ENCODE measurements at regions of chr3 and their contacts with region 1.

Region 1: DNA sequence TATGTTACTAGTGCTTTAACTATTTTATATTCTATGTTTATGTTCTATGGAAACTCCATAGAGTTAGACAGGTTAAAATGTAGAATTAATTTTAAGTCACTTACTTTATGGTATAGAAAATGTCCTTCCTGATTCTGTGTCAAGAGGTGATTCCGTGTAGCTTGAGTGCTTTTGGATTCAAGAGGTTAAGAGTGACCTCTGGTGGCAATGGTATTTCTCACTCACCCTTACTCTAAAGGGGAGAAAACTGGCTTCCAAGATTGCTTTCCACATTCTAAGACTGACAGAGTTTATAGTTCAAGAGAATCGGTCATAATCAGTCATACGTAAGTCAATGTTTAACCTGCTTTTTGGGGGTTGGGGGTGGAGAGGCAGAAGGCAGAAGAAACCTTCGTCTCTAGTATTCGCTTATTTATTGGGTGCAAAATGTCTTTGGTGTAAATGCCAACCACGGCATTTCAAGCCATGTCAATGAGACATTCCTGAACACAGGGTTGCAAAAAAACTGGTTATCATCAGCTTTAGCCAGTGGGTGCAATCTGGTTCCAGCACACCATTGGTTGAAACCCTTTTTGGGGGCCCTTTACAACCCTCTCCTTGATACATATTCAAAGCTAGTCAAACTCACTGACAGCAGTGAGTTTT is 92.0 kb upstream of the VGLL3 start:
- DNase-seq: peak; percentile 78
- H3K4me3 Mint-ChIP-seq: no peak overlapping the region
- H3K27ac Mint-ChIP-seq: no peak overlapping the region
- H3K4me1 Mint-ChIP-seq: peaks cover 6% of the 10 kb centered on the region
- H3K27me3 Mint-ChIP-seq: no peaks in the 10 kb centered on the region
- CTCF ChIP-seq: peak; percentile 56

Region 2: GRCh38 chr3:86563400-86563970 is 519.4 kb before region 1 on chr3:
- CTCF ChIA-PET with region 1: no interaction called
- POLR2A ChIA-PET with region 1: no interaction called
- intact Hi-C with region 1: loop called (anchors 10 kb)
- DNase-seq: peak; percentile 49
- H3K4me3 Mint-ChIP-seq: no peak overlapping the region
- H3K27ac Mint-ChIP-seq: no peak overlapping the region
- H3K4me1 Mint-ChIP-seq: no peaks in the 10 kb centered on the region
- H3K27me3 Mint-ChIP-seq: peaks cover 64% of the 10 kb centered on the region
- CTCF ChIP-seq: peak; percentile 46

Region 3: DNA sequence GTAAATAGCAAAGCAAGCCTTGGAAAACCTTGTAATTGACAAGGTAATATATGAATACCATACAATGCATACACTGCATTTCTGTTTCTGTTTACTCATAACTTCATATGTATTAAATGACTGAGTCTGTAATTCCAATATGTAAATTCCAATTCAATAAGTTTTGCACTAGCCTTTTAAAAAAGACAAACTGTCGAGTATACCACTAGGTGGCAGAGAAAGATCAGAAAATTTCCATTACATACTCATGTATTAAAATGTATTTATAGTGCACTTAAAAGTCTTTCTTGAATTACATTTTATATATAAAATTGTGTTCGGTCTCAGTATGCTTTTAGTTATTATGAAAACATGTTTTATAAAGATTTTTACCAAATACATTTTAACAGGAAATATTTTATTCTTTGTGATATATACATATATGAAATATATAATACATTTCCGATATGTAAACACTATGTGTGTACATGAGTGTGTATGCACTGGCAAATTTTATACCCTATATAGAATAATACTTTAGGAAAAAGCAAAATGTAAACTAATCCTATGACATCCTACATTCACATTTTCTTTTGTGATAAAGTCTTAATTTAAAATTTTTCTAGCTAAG is 308.7 kb before region 1 on chr3:
- CTCF ChIA-PET with region 1: interaction called, 147 read pairs
- POLR2A ChIA-PET with region 1: interaction called, 6 read pairs
- intact Hi-C with region 1: loop called (anchors 1 kb)
- DNase-seq: peak; percentile 45
- H3K4me3 Mint-ChIP-seq: no peak overlapping the region
- H3K27ac Mint-ChIP-seq: no peak overlapping the region
- H3K4me1 Mint-ChIP-seq: no peaks in the 10 kb centered on the region
- H3K27me3 Mint-ChIP-seq: no peaks in the 10 kb centered on the region
- CTCF ChIP-seq: peak; percentile 35

Region 4: GRCh38 chr3:86969500-86970189 is 113.3 kb before region 1 on chr3:
- CTCF ChIA-PET with region 1: interaction called, 6 read pairs
- POLR2A ChIA-PET with region 1: interaction called, 3 read pairs
- intact Hi-C with region 1: loop called (anchors 1 kb)
- DNase-seq: peak; percentile 79
- H3K4me3 Mint-ChIP-seq: no peak overlapping the region
- H3K27ac Mint-ChIP-seq: no peak overlapping the region
- H3K4me1 Mint-ChIP-seq: peaks cover 18% of the 10 kb centered on the region
- H3K27me3 Mint-ChIP-seq: no peaks in the 10 kb centered on the region
- CTCF ChIP-seq: peak; percentile 72

Region 5: DNA sequence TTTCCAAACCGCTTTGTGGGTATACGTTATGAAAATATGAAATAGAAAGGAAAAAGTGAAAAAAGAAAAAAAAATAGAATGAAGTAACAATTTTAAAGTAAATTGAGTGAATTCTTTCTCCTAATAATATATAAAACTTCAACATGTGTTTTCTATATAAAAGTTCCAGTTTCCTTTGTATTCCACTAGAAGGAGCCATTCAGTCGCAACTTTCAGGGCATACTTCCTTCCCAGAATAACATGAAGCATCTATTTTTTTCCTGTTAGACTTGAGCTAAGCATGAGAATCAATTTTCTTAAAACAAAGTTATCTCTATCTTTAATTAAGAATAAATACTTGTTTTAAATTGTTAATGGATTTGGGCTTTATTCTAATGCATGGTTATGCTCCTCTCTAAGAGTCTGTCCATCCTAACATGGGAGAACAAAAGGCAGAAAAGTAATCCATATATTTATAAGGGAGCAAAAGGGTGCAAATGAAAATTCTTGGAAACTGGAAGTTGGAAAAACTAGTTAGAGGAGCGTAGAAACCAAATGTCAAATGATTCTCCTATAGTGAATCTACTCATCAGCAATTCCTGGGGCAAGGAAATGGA is 76.0 kb before region 1 on chr3:
- CTCF ChIA-PET with region 1: interaction called, 13 read pairs
- POLR2A ChIA-PET with region 1: no interaction called
- intact Hi-C with region 1: loop called (anchors 2 kb)
- DNase-seq: no peak
- H3K4me3 Mint-ChIP-seq: no peak overlapping the region
- H3K27ac Mint-ChIP-seq: no peak overlapping the region
- H3K4me1 Mint-ChIP-seq: no peaks in the 10 kb centered on the region
- H3K27me3 Mint-ChIP-seq: no peaks in the 10 kb centered on the region
- CTCF ChIP-seq: peak; percentile 34

Region 6: GRCh38 chr3:87206074-87207034 is 123.4 kb after region 1 on chr3:
- CTCF ChIA-PET with region 1: no interaction called
- POLR2A ChIA-PET with region 1: no interaction called
- intact Hi-C with region 1: loop called (anchors 1 kb)
- DNase-seq: peak; percentile 84
- H3K4me3 Mint-ChIP-seq: no peak overlapping the region
- H3K27ac Mint-ChIP-seq: no peak overlapping the region
- H3K4me1 Mint-ChIP-seq: peaks cover 11% of the 10 kb centered on the region
- H3K27me3 Mint-ChIP-seq: no peaks in the 10 kb centered on the region
- CTCF ChIP-seq: no peak

Region 7: DNA sequence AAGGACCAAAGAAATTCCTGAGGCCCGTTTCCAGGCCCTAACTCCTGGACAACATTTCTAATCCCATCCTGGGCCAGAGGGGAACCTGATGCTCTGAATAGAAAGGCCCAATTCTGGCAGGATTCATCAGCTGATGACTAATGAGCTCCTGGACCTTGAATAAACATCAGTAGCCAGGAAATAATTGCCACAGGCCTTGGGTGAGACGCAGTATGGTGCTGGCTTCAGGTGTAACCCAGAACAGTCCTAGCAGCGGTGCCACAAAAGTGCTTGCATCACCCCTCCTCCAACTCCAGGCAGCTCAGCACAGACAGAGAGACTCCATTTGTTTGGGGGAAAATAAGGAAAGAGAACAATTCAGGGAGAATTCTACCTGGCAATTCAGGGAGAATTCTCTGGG is 378.1 kb after region 1 on chr3:
- CTCF ChIA-PET with region 1: no interaction called
- POLR2A ChIA-PET with region 1: no interaction called
- intact Hi-C with region 1: no loop called
- DNase-seq: peak; percentile 66
- H3K4me3 Mint-ChIP-seq: no peak overlapping the region
- H3K27ac Mint-ChIP-seq: peak overlapping the region; percentile 77
- H3K4me1 Mint-ChIP-seq: peaks cover 21% of the 10 kb centered on the region
- H3K27me3 Mint-ChIP-seq: no peaks in the 10 kb centered on the region
- CTCF ChIP-seq: no peak